ENCODE measurements at regions of chr16 and their contacts with region 1.

Region 1: GRCh38 chr16:3059000-3059722 is 6.3 kb upstream of the IL32 start:
- DNase-seq: peak; percentile 94 to 95
- H3K4me3 ChIP-seq: peak overlapping the region; percentile 91
- H3K4me3 Mint-ChIP-seq: peak overlapping the region; percentile 81
- H3K27ac Mint-ChIP-seq: peak overlapping the region; percentile 90
- H3K4me1 ChIP-seq: peaks cover 15% of the 10 kb centered on the region
- H3K4me1 Mint-ChIP-seq: no peaks in the 10 kb centered on the region
- H3K27me3 ChIP-seq: no peaks in the 10 kb centered on the region
- H3K27me3 Mint-ChIP-seq: no peaks in the 10 kb centered on the region
- CTCF ChIP-seq: peak; percentile 70 to 93

Region 2: DNA sequence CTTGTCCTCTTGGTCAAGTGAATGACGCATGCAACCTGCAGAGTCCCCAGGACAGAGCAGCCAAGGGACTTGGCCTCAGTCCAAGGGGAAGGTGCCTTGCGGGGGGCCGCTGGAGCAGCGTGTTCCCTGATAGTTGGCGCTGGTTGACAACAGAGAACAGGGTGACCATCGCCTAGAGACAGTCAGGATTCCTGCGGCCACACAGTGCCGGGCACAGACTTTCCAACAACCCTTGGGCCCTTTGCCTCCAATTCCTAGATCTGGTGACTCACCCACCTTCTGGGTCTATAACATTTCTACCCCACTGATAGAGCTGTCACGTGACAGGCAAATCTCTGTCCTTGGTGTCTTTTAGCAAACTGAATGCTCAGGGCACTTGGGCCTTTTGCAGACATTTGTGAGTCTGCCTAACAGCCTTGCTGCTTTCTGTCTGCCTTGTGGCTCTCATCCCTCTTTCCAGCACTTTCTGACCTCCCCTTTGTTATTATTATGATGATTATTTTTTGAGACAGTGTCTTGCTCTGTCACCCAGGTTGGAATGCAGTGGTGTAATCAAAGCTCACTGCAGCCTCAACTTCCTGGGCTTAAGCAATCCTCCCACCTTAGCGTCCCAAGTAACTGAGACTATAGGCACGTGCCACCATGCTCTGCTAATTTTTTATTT is 611.1 kb before region 1 on chr16:
- CTCF ChIA-PET with region 1: no interaction called
- POLR2A ChIA-PET with region 1: no interaction called
- intact Hi-C with region 1: no loop called
- DNase-seq: no peak
- H3K4me3 ChIP-seq: no peak overlapping the region
- H3K4me3 Mint-ChIP-seq: no peak overlapping the region
- H3K27ac Mint-ChIP-seq: peak overlapping the region; percentile 42
- H3K4me1 ChIP-seq: no peaks in the 10 kb centered on the region
- H3K4me1 Mint-ChIP-seq: no peaks in the 10 kb centered on the region
- H3K27me3 ChIP-seq: no peaks in the 10 kb centered on the region
- H3K27me3 Mint-ChIP-seq: no peaks in the 10 kb centered on the region
- CTCF ChIP-seq: no peak

Region 3: GRCh38 chr16:3023669-3024478 is 35.3 kb before region 1 on chr16 and contains the starts of genes HCFC1R1 and THOC6:
- CTCF ChIA-PET with region 1: interaction called, 11 read pairs
- POLR2A ChIA-PET with region 1: no interaction called
- intact Hi-C with region 1: no loop called
- DNase-seq: peak; percentile 95 to 97
- H3K4me3 ChIP-seq: peak within 1 kb of the TSS; percentile 69
- H3K4me3 Mint-ChIP-seq: peak within 1 kb of the TSS; percentile 72
- H3K27ac Mint-ChIP-seq: peak within 1 kb of the TSS; percentile 89
- H3K4me1 ChIP-seq: peaks cover 26% of the 10 kb centered on the region
- H3K4me1 Mint-ChIP-seq: peaks cover 24% of the 10 kb centered on the region
- H3K27me3 ChIP-seq: no peaks in the 10 kb centered on the region
- H3K27me3 Mint-ChIP-seq: no peaks in the 10 kb centered on the region
- CTCF ChIP-seq: no peak
- total RNA-seq, gene HCFC1R1: 40.8 and 44.9 TPM in 2 replicates
- total RNA-seq, gene THOC6: 46.0 and 48.0 TPM in 2 replicates

Region 4: GRCh38 chr16:3045729-3046505 is 13.2 kb before region 1 on chr16:
- CTCF ChIA-PET with region 1: interaction called, 18 read pairs
- POLR2A ChIA-PET with region 1: no interaction called
- intact Hi-C with region 1: no loop called
- DNase-seq: no peak
- H3K4me3 ChIP-seq: peak overlapping the region; percentile 45
- H3K4me3 Mint-ChIP-seq: peak overlapping the region; percentile 61
- H3K27ac Mint-ChIP-seq: no peak overlapping the region
- H3K4me1 ChIP-seq: no peaks in the 10 kb centered on the region
- H3K4me1 Mint-ChIP-seq: no peaks in the 10 kb centered on the region
- H3K27me3 ChIP-seq: no peaks in the 10 kb centered on the region; the same call in 1 of the 2 replicates
- H3K27me3 Mint-ChIP-seq: peaks cover 4% of the 10 kb centered on the region
- CTCF ChIP-seq: no peak

Region 5: DNA sequence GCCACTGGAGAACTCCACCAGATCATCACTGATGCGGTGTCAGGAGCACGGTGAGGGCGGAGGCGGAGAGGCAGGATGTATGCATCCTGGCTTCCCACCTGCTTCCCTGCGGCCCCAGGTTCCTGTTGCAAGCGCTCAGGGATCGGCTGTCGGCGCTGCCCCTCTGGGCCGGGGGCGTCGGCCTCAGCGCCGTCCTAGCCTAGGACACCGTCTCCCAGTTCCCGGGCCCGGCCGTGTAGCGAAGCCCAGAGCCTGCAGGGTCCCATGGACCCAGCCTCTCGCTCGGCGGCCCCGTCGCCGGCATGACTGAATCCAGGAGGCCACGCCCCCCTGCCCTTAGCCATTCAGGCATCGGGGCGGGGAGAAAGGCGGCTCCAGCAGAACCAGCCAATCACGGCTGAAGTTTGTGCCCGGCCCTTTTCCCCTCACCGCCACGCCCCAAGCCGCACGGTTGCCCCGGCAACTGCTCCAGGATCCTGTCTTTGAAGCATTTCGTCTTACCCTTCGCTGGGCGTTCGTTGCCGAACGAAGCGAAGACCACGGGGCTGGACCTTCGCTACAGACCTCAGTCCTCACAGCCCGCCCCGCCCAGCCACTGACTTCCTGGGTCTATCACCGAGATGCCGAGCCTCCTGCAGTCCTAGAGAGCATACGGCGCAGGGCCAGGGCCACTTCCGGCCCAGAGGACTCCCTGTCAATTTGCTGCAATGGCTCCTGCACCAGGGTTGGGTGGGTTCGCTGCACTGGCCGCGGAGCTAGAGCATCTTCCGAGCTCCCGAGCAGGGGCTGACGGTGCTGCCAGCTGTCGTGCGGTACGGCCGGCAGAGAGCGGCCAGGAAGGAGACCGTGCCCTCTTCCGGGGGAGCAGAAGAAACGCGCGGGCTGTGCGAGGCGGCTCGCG is 65.1 kb after region 1 on chr16:
- CTCF ChIA-PET with region 1: interaction called, 44 read pairs
- POLR2A ChIA-PET with region 1: no interaction called
- intact Hi-C with region 1: loop called (anchors 1 kb)
- DNase-seq: peak; percentile 95 to 96
- H3K4me3 ChIP-seq: peak overlapping the region; percentile 72
- H3K4me3 Mint-ChIP-seq: peak overlapping the region; percentile 90
- H3K27ac Mint-ChIP-seq: peak overlapping the region; percentile 87
- H3K4me1 ChIP-seq: peaks cover 4% of the 10 kb centered on the region; the same call in 1 of the 2 replicates
- H3K4me1 Mint-ChIP-seq: peaks cover 14% of the 10 kb centered on the region
- H3K27me3 ChIP-seq: no peaks in the 10 kb centered on the region
- H3K27me3 Mint-ChIP-seq: no peaks in the 10 kb centered on the region
- CTCF ChIP-seq: peak in 1 of 2 experiments; percentile 29

Region 6: GRCh38 chr16:3134564-3135417 is 75.6 kb after region 1 on chr16 and contains the start of gene ZNF213:
- CTCF ChIA-PET with region 1: interaction called, 44 read pairs
- POLR2A ChIA-PET with region 1: interaction called, 5 read pairs
- intact Hi-C with region 1: loop called (anchors 1 kb)
- DNase-seq: peak; percentile 94 to 96
- H3K4me3 ChIP-seq: peak within 1 kb of the TSS; percentile 84
- H3K4me3 Mint-ChIP-seq: peak within 1 kb of the TSS; percentile 90
- H3K27ac Mint-ChIP-seq: peak within 1 kb of the TSS; percentile 91
- H3K4me1 ChIP-seq: no peaks in the 10 kb centered on the region
- H3K4me1 Mint-ChIP-seq: peaks cover 1% of the 10 kb centered on the region
- H3K27me3 ChIP-seq: no peaks in the 10 kb centered on the region
- H3K27me3 Mint-ChIP-seq: no peaks in the 10 kb centered on the region
- CTCF ChIP-seq: no peak
- total RNA-seq, gene ZNF213: 5.3 and 5.5 TPM in 2 replicates

Region 7: DNA sequence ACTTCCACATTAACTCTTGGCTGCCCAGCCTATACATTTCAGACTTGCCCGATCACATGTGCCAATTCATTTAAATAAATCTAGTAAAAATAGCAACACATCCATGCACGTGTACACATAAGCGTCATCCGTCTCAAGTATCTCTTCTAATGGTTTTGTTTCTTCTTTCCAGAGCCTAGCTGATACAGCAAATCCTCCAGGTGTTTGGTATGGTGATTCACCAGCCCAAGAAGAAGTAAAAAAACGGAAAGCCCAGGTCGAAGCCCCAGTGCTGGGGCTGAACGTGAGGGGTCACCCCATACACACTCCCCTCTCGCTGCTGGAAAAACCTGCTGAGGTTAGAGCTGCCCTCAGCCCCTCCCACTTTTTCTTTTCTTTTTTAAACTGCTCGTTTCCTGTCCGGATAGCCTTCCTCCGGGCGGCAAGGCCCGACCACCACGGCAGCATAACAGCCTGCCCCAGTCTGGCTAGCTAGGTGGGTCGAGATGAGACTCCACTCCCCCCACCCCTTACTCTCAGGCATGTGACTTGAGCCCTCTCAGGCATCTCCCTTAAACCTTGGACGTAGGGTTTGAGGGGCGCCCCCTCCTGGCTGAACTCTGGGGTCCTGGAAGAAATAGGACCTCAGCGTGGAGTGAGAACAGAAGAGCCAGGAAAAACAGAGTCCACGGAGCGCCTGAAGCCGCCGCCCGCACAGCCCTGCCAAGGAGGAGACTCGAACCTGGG is 114.9 kb after region 1 on chr16:
- CTCF ChIA-PET with region 1: no interaction called
- POLR2A ChIA-PET with region 1: no interaction called
- intact Hi-C with region 1: no loop called
- DNase-seq: no peak
- H3K4me3 ChIP-seq: no peak overlapping the region; the same call in 1 of the 2 replicates
- H3K4me3 Mint-ChIP-seq: peak overlapping the region; percentile 55
- H3K27ac Mint-ChIP-seq: no peak overlapping the region
- H3K4me1 ChIP-seq: no peaks in the 10 kb centered on the region
- H3K4me1 Mint-ChIP-seq: no peaks in the 10 kb centered on the region
- H3K27me3 ChIP-seq: no peaks in the 10 kb centered on the region
- H3K27me3 Mint-ChIP-seq: no peaks in the 10 kb centered on the region
- CTCF ChIP-seq: peak in 1 of 2 experiments; percentile 31

Region 8: DNA sequence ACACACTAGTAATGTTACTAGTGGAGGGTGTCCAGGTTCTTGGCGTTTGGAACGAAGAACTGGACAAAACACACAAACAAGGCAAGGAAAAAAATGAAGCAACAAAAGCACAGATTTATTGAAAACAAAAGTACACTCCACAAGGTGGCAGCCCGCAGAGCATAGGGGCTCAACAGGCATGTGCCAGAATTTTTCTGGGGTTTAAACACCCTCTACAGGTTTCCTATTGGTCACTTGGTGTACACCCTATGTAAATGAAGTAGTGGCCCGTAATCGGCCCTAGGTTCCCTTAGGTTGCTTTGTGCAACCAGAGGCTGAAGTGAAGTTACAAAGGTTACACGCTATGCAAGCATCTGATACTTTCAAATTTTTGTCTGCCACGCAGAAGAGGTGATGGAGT is 304.6 kb after region 1 on chr16:
- CTCF ChIA-PET with region 1: no interaction called
- POLR2A ChIA-PET with region 1: no interaction called
- intact Hi-C with region 1: no loop called
- DNase-seq: peak; percentile 41 to 47
- H3K4me3 ChIP-seq: no peak overlapping the region
- H3K4me3 Mint-ChIP-seq: no peak overlapping the region
- H3K27ac Mint-ChIP-seq: no peak overlapping the region
- H3K4me1 ChIP-seq: no peaks in the 10 kb centered on the region
- H3K4me1 Mint-ChIP-seq: no peaks in the 10 kb centered on the region
- H3K27me3 ChIP-seq: no peaks in the 10 kb centered on the region
- H3K27me3 Mint-ChIP-seq: no peaks in the 10 kb centered on the region
- CTCF ChIP-seq: peak in 1 of 2 experiments; percentile 15